CD14-positive monocyte (primary cell): ENCODE measurements at regions of chr9 and their contacts with region 1.

Region 1: DNA sequence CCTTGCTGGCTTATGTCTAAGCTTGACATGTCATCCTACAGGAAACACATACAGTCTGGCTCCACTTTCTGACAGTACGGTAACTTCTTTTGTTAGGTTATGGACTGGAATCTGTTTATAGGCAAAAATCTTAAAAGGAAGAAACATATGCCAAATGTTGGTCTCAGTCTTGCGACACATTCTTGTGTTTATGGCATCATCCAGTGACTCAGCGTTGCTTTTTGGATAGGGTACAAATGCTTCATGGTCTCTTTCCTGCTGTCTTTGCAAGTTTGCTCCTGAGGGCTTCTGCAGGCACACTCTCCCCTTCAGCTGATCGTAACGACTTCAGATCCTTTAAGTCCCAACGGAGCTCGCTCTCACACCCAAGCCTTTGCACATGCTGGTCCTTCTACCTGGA is 23.5 kb upstream of the TNFSF8 start:
- DNase-seq: peak; percentile 86 to 94 (median 93)
- H3K4me3 ChIP-seq: peak overlapping the region in 2 of 3 experiments; percentile 25 to 54
- H3K4me3 Mint-ChIP-seq: peak overlapping the region; percentile 69 to 94
- H3K27ac ChIP-seq: peak overlapping the region; percentile 76 to 99
- H3K27ac Mint-ChIP-seq: peak overlapping the region; percentile 96 to 100 (median 99)
- H3K4me1 ChIP-seq: peaks cover 64 to 67% of the 10 kb centered on the region in 2 donors
- H3K4me1 Mint-ChIP-seq: peaks cover 68% of the 10 kb centered on the region
- H3K27me3 ChIP-seq: no peaks in the 10 kb centered on the region
- H3K27me3 Mint-ChIP-seq: peaks cover 0 to 2% (median 0%) of the 10 kb centered on the region in 3 donors
- CTCF ChIP-seq: no peak

Region 2: DNA sequence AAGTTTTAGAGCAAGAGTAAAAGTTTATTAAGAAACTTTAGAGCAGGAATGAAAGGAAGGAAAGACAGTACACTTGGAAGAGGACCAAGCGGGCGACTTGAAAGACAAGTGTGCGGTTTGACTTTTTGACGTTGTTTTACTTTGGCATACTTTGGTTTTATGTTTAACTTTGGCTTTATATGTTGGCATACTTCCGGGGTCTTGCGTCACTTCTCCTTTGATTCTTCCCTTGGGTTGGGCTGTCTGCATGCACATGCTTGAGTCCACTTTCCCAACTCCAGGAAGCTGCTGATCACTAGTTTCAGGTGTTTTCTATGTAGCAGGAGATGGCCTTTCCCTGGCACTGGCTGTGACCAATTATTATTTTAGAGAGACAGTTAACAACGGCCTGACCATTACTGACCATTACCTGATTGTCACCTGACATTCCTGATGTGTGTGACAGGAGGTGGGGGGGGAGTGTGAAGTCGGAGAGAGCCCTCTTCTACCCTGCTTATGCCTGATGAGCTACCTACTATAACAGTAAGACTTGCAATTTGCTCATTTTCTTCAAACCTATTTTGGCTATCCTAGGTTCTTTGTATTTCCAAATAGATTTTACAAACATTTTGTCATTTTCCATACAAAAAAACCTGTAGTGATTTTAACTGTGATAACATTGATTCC is 69.0 kb before region 1 on chr9:
- intact Hi-C with region 1: loop called (anchors 5 kb)
- DNase-seq: peak in 1 of 3 donors; percentile 27
- H3K4me3 ChIP-seq: peak overlapping the region in 1 of 3 experiments; percentile 20
- H3K4me3 Mint-ChIP-seq: no peak overlapping the region
- H3K27ac ChIP-seq: peak overlapping the region in 1 of 2 donors; percentile 57
- H3K27ac Mint-ChIP-seq: peak overlapping the region in 6 of 7 donors; percentile 46 to 86 (median 76)
- H3K4me1 ChIP-seq: peaks cover 21 to 39% of the 10 kb centered on the region in 2 donors
- H3K4me1 Mint-ChIP-seq: peaks cover 12% of the 10 kb centered on the region
- H3K27me3 ChIP-seq: no peaks in the 10 kb centered on the region
- H3K27me3 Mint-ChIP-seq: no peaks in the 10 kb centered on the region
- CTCF ChIP-seq: no peak

Region 3: DNA sequence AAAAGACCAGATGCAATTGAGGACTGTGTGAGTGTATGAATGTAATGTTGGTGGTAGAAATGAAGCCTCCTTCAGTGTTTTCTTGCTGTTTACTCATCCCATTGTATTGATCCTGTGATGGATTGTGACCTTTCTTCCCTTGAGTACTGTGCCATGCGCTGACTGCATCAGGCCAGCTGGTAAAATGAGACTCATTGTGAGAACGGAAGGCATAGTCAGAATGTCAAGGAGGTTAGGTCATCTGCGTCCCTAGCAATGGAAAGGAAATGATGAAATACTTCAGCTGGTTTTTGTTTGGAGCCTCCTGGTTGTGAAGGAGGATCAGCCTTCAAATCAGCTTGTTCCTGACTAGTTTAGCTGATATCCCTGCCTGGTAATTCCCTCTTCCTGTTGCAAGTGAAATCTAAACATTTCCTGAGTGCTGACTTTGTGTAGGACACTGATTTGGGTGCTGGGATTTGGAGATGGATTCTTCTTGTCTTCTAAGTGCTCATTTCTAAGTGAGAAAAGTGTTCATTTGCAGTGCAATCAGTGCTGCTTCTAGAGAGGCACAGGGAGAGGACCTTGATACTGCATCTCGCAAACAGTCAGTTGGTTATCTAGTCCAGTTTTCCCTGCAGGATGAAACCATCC is 59.0 kb before region 1 on chr9:
- intact Hi-C with region 1: loop called in 1 of 2 experiments (anchors 5 kb)
- DNase-seq: peak; percentile 74 to 92 (median 85)
- H3K4me3 ChIP-seq: peak overlapping the region in 1 of 3 experiments; percentile 21
- H3K4me3 Mint-ChIP-seq: peak overlapping the region in 1 of 2 donors; percentile 39
- H3K27ac ChIP-seq: peak overlapping the region in 1 of 2 donors; percentile 84
- H3K27ac Mint-ChIP-seq: peak overlapping the region; percentile 84 to 97 (median 92)
- H3K4me1 ChIP-seq: peaks cover 68 to 70% of the 10 kb centered on the region in 2 donors
- H3K4me1 Mint-ChIP-seq: peaks cover 42% of the 10 kb centered on the region
- H3K27me3 ChIP-seq: no peaks in the 10 kb centered on the region
- H3K27me3 Mint-ChIP-seq: peaks cover 0 to 1% (median 0%) of the 10 kb centered on the region in 3 donors
- CTCF ChIP-seq: no peak

Region 4: GRCh38 chr9:114938687-114939575 is 15.0 kb before region 1 on chr9:
- intact Hi-C with region 1: loop called in 1 of 2 experiments (anchors 2 kb)
- DNase-seq: no peak
- H3K4me3 ChIP-seq: no peak overlapping the region
- H3K4me3 Mint-ChIP-seq: no peak overlapping the region
- H3K27ac ChIP-seq: no peak overlapping the region
- H3K27ac Mint-ChIP-seq: peak overlapping the region in 5 of 7 donors; percentile 3 to 71 (median 35)
- H3K4me1 ChIP-seq: peaks cover 27 to 35% of the 10 kb centered on the region in 2 donors
- H3K4me1 Mint-ChIP-seq: peaks cover 34% of the 10 kb centered on the region
- H3K27me3 ChIP-seq: no peaks in the 10 kb centered on the region
- H3K27me3 Mint-ChIP-seq: peaks cover 0 to 3% (median 0%) of the 10 kb centered on the region in 3 donors
- CTCF ChIP-seq: no peak